Activated CD8-positive, alpha-beta T cell treated with anti-CD3 and anti-CD28 coated beads, Interleukin-2, amount 10 ng/mL, durations not matched to agents 7 days and 5 days (primary cell): ENCODE measurements at regions of chr15 and their contacts with region 1.

Region 1: DNA sequence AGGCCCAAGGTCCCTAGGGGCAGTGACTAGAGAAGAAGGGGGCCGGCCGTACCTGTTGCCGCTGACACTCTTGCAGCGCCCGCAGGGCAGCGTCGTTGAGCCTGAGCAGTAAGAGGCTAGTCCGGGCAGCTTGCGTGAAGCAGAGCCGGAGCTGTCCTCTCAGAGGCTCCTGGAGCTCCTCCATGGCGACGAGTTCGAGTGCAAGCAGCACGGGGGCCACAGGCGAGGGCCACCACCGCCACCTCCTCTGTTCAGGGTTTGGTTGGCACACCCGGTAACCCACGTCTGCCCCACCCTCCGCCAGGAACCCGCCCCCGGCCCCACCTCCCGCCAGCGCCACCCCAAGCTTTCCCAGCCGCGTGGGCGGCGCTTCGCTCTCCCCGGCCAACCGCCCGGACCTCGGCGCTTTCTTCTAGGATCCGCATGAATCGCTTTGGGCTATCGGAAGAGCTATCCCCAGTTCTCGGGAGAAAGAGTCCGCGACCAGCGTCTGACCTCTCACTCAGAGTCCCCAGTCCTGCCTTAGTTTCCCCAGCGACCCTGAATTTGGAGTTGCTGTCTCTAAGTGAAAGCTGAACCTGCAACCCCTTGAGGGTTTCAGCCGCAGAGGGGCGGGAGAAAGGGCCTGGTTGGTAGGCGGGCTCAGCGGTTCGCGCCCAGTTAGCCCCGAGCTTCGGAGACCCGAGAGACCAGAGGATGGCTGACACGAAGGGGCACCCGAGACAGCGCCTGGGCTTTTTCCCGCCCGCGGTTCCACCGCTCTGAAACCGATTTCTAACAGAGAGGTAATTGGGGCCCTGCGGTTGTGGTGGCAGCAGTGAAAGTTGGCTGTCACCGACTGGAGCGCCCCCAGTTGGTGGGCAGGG is at the start of gene ELL3:
- DNase-seq: peak; percentile 91
- ATAC-seq: peak; percentile 88
- H3K4me3 Mint-ChIP-seq: peak within 1 kb of the TSS; percentile 92
- H3K27ac Mint-ChIP-seq: peak within 1 kb of the TSS; percentile 95
- H3K4me1 Mint-ChIP-seq: peaks cover 28% of the 10 kb centered on the region
- H3K27me3 Mint-ChIP-seq: no peaks in the 10 kb centered on the region
- total RNA-seq, gene ELL3: 3.1 to 4.4 TPM

Region 2: GRCh38 chr15:43749690-43750345 is 27.1 kb before region 1 on chr15:
- CTCF ChIA-PET with region 1: interaction called, 10 read pairs
- POLR2A ChIA-PET with region 1: interaction called, 11 read pairs
- DNase-seq: peak; percentile 71
- ATAC-seq: peak; percentile 45
- H3K4me3 Mint-ChIP-seq: peak overlapping the region; percentile 74
- H3K27ac Mint-ChIP-seq: peak overlapping the region; percentile 93
- H3K4me1 Mint-ChIP-seq: peaks cover 40% of the 10 kb centered on the region
- H3K27me3 Mint-ChIP-seq: no peaks in the 10 kb centered on the region

Region 3: GRCh38 chr15:43791993-43792760 is 15.2 kb after region 1 on chr15 and contains the start of gene SERF2:
- CTCF ChIA-PET with region 1: interaction called, 42 read pairs
- POLR2A ChIA-PET with region 1: interaction called, 6 read pairs
- DNase-seq: peak; percentile 100
- ATAC-seq: peak; percentile 96
- H3K4me3 Mint-ChIP-seq: peak within 1 kb of the TSS; percentile 96
- H3K27ac Mint-ChIP-seq: peak within 1 kb of the TSS; percentile 98
- H3K4me1 Mint-ChIP-seq: peaks cover 44% of the 10 kb centered on the region
- H3K27me3 Mint-ChIP-seq: no peaks in the 10 kb centered on the region
- total RNA-seq, gene SERF2: 1,025 to 1,042 TPM

Region 4: DNA sequence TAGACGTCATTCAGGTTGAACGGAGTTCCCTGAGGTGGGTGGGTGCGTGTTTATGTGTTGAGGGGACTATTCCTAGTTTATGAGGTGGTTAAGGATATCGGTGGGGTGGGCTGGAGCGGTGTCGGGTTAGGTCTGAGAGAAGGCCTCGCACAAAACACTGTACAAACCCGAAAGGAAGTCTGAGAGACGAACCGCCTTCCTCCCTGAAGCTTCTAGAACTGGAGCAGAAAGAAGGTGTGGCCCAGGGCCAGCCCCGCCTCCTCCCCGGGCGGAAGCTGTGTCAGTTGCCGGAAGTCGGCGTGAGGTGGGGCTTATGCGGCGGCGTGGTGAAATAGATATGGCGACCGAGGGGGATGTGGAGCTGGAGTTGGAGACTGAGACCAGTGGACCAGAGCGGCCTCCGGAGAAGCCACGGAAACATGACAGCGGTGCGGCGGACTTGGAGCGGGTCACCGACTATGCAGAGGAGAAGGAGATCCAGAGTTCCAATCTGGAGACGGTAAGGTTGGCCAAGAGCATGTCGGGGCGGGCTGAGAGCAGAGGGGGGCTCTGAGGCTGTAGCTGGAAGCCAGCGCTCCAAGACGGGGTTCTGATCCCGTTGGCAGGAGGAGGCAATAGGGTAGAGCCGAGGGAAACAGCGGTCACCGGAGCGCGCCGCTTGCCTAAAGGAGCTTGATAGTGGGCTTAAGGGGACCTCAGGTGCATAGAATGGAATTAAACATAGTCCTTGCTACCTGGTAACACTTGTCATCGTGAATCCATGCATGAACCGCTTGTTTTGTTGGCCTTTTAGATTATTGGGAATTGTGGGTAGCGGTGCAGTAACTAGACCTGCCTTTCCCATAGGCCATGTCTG is 23.6 kb after region 1 on chr15 and contains the start of gene HYPK:
- CTCF ChIA-PET with region 1: interaction called, 17 read pairs
- POLR2A ChIA-PET with region 1: interaction called, 15 read pairs
- DNase-seq: peak; percentile 95
- ATAC-seq: peak; percentile 97
- H3K4me3 Mint-ChIP-seq: peak within 1 kb of the TSS; percentile 98
- H3K27ac Mint-ChIP-seq: peak within 1 kb of the TSS; percentile 98
- H3K4me1 Mint-ChIP-seq: peaks cover 43% of the 10 kb centered on the region
- H3K27me3 Mint-ChIP-seq: no peaks in the 10 kb centered on the region
- total RNA-seq, gene HYPK: 15.8 to 19.9 TPM

Region 5: DNA sequence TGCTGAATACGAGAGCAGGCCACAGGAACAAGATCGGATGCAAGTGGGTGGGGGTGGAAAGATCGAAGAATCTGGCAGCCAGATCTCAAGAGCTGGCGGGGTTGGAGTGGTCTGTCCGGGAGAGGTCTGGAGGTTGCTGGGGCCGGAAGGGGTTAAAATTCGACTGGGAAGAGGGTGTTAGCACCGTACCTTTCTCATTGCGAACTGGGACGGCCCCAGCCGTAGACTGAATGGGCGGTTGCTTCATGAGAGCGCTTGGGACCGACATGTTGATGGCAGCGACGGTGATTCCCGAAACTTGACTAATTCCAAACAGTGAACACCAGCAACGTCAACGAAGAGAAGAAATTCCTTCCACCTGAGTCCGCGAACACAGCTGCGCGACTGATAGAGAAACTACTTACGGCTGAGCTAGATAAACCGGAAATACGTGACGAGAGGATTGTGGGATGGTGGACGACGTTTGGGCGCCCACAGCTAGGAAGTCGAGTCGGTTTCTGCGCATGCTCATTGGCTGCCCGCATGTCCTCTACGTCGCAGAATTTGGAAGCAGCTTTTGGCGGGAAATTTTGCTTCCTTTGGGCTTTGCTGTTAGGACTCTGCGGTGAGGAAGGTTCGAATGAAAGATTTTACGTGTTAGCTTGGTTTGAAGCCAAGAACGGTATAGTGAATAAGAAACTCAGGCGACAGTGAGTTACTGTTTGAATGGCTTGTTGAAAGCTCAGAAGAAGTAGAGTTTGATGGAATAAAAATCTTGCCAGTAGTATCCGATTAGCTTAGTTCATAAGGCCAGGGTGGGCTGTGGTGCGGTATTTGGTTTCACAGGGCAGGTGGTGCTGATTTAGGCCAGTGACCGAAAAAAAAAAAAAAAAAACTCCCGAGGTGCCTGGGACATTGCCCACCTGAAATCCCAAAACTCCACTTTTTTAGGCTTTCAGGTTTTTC is 47.6 kb after region 1 on chr15 and contains the start of gene MFAP1:
- CTCF ChIA-PET with region 1: interaction called, 11 read pairs
- POLR2A ChIA-PET with region 1: interaction called, 18 read pairs
- DNase-seq: peak; percentile 96
- ATAC-seq: peak; percentile 82
- H3K4me3 Mint-ChIP-seq: peak within 1 kb of the TSS; percentile 89
- H3K27ac Mint-ChIP-seq: peak within 1 kb of the TSS; percentile 96
- H3K4me1 Mint-ChIP-seq: peaks cover 60% of the 10 kb centered on the region
- H3K27me3 Mint-ChIP-seq: no peaks in the 10 kb centered on the region
- total RNA-seq, gene MFAP1: 35.8 to 40.1 TPM

Region 6: GRCh38 chr15:43958861-43959330 is 181.9 kb after region 1 on chr15:
- CTCF ChIA-PET with region 1: no interaction called
- POLR2A ChIA-PET with region 1: no interaction called
- DNase-seq: no peak
- ATAC-seq: no peak
- H3K4me3 Mint-ChIP-seq: no peak overlapping the region
- H3K27ac Mint-ChIP-seq: no peak overlapping the region
- H3K4me1 Mint-ChIP-seq: peaks cover 5% of the 10 kb centered on the region
- H3K27me3 Mint-ChIP-seq: peaks cover 25% of the 10 kb centered on the region